Sigmoid colon (tissue), 7 donors: ENCODE measurements at regions of chr1 and their contacts with region 1.

Region 1: GRCh38 chr1:215526553-215527151 is 40.5 kb upstream of the KCTD3 start:
- DNase-seq: no peak
- H3K4me3 ChIP-seq: no peak overlapping the region
- H3K27ac ChIP-seq: no peak overlapping the region
- H3K4me1 ChIP-seq: no peaks in the 10 kb centered on the region
- H3K27me3 ChIP-seq: no peaks in the 10 kb centered on the region
- CTCF ChIP-seq: peak; percentile 26 to 66 (median 55)
- EP300 ChIP-seq: no peak
- POLR2A ChIP-seq: no peak

Region 2: DNA sequence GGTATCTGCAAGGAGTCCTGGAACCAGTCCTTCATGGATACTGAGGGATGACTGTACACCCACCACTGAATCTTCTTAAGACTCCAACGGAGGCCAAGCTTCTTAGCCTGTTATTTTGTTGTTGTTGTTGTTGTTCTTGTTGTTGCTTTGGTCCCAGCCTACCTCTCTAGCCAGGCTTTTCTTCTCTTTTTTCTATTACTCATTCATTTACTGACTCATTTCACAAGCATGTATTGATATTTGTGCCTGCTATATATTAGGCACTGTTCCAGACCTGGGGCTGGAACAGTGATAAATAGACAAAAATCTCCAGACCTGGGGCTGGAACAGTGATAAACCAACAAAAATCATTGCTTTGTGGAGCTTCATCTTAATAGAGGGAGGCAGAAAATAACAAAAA is 903.2 kb before region 1 on chr1:
- intact Hi-C with region 1: loop called (anchors 2 kb)
- DNase-seq: no peak
- H3K4me3 ChIP-seq: no peak overlapping the region
- H3K27ac ChIP-seq: no peak overlapping the region
- H3K4me1 ChIP-seq: no peaks in the 10 kb centered on the region
- H3K27me3 ChIP-seq: no peaks in the 10 kb centered on the region
- CTCF ChIP-seq: no peak
- EP300 ChIP-seq: no peak
- POLR2A ChIP-seq: no peak

Region 3: DNA sequence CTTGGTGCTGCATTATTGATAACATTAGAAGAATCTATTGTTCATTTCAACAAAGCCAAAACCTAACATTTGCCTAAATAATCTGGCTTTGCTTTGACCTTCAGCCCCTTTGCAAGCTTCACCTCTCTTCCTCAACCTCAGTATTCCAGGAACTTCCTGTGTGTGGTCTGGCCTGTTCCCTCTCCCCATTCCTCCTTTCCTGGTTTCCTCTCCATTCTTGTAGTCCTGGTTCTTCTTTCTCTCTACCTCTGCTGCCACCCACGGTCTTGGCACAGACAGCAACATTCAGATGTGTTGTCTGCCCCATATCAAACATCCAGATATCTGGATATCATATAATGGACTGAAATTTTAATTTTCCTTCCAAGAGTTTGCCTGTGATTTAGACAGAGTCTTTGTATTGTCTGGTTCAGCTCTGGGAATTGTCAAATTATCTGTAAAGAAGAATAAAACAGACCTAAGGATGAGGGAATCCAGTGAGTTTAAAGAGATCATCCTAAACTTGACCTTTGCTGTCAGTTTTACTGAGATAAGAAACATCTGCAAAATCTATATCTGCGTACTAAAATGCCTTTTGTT is 107.7 kb before region 1 on chr1:
- intact Hi-C with region 1: no loop called
- DNase-seq: no peak
- H3K4me3 ChIP-seq: no peak overlapping the region
- H3K27ac ChIP-seq: no peak overlapping the region
- H3K4me1 ChIP-seq: no peaks in the 10 kb centered on the region
- H3K27me3 ChIP-seq: no peaks in the 10 kb centered on the region
- CTCF ChIP-seq: no peak
- EP300 ChIP-seq: no peak
- POLR2A ChIP-seq: no peak

Region 4: DNA sequence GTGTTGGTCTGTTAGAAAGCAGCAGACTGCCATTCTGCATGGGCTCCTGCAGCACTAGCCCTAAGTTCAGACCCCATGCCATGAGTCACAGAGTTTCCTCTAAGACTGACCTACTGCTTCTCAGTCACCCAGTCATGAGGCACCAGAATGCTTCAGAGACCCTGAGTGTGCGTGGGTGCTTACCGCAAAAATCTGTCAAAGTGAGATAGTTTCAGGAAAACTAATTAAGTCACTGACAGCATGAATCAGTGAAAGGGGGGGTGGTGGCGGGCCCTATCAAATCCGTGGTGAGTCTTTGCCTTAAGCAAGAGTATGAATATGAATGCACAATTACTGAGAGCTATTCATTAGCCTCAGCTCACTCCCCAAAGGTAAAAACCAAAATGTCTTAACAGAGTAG is 138.6 kb after region 1 on chr1:
- intact Hi-C with region 1: no loop called
- DNase-seq: no peak
- H3K4me3 ChIP-seq: no peak overlapping the region
- H3K27ac ChIP-seq: no peak overlapping the region
- H3K4me1 ChIP-seq: no peaks in the 10 kb centered on the region
- H3K27me3 ChIP-seq: no peaks in the 10 kb centered on the region
- CTCF ChIP-seq: no peak
- EP300 ChIP-seq: no peak
- POLR2A ChIP-seq: no peak